Pancreas (tissue), 10 donors: ENCODE measurements at regions of chr16 and their contacts with region 1.

Region 1: GRCh38 chr16:81537721-81538561 is 93.3 kb downstream of the CMIP start:
- DNase-seq: peak in 1 of 6 donors; percentile 3
- ATAC-seq: no peak
- H3K4me3 ChIP-seq: no peak overlapping the region
- H3K27ac ChIP-seq: no peak overlapping the region
- H3K4me1 ChIP-seq: peaks cover 0 to 3% (median 2%) of the 10 kb centered on the region in 3 donors
- H3K27me3 ChIP-seq: no peaks in the 10 kb centered on the region
- CTCF ChIP-seq: no peak

Region 2: DNA sequence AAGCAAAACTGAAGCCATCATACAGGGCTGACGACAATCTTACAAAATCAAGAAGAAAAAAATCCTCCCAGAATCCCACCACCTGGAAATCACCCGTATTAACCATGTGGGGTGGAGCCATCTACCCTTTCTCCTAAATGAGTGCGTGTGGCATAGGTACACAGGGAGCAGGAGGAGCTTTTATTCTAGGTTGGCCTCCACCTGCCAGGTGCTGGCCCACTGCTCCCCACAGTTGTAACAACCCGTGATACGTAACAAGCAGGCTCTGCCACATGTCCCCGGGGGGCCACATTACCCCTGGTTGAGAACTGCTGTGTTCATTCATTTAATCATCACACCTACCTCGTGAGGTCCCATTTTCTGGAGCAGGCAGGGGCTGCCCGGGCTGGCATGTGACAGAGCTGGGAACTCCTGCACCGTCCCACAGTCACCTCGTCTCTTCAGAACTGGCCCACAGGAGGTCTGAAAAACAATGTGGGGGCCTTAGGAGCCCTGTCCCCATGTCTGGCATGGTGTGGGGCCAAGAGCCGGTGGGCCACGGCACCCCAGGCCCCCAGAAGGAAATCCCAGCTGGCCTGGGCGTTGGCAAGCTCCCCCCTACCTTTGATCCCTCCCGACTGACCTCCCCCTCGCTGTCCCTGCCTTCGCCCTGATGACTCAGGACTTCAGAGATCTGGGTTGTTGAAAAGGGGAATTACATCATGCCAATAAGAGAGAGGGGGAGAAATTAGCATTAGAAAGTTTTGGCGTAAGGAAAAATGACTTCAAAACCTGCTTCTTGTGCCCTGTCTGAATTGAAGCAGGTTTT is 80.4 kb before region 1 on chr16:
- intact Hi-C with region 1: loop called in 1 of 3 experiments (anchors 10 kb)
- DNase-seq: no peak
- ATAC-seq: peak; percentile 53 to 84 (median 62)
- H3K4me3 ChIP-seq: no peak overlapping the region
- H3K27ac ChIP-seq: peak overlapping the region in 2 of 4 donors; percentile 22 to 30
- H3K4me1 ChIP-seq: peaks cover 3 to 36% (median 14%) of the 10 kb centered on the region in 3 donors
- H3K27me3 ChIP-seq: no peaks in the 10 kb centered on the region
- CTCF ChIP-seq: no peak

Region 3: GRCh38 chr16:81486555-81487061 is 51.3 kb before region 1 on chr16:
- intact Hi-C with region 1: no loop called
- DNase-seq: no peak
- ATAC-seq: peak in 1 of 4 donors; percentile 10
- H3K4me3 ChIP-seq: no peak overlapping the region
- H3K27ac ChIP-seq: no peak overlapping the region
- H3K4me1 ChIP-seq: peaks cover 0 to 4% (median 3%) of the 10 kb centered on the region in 3 donors
- H3K27me3 ChIP-seq: no peaks in the 10 kb centered on the region
- CTCF ChIP-seq: no peak

Region 4: GRCh38 chr16:81623363-81624102 is 85.6 kb after region 1 on chr16:
- intact Hi-C with region 1: no loop called
- DNase-seq: peak in 2 of 6 donors; percentile 33 to 46
- ATAC-seq: no peak
- H3K4me3 ChIP-seq: no peak overlapping the region
- H3K27ac ChIP-seq: no peak overlapping the region
- H3K4me1 ChIP-seq: peaks cover 7 to 18% (median 15%) of the 10 kb centered on the region in 3 donors
- H3K27me3 ChIP-seq: no peaks in the 10 kb centered on the region
- CTCF ChIP-seq: peak in 3 of 4 donors; percentile 19 to 30 (median 29)